ENCODE measurements at regions of chr6 and their contacts with region 1.

Region 1: DNA sequence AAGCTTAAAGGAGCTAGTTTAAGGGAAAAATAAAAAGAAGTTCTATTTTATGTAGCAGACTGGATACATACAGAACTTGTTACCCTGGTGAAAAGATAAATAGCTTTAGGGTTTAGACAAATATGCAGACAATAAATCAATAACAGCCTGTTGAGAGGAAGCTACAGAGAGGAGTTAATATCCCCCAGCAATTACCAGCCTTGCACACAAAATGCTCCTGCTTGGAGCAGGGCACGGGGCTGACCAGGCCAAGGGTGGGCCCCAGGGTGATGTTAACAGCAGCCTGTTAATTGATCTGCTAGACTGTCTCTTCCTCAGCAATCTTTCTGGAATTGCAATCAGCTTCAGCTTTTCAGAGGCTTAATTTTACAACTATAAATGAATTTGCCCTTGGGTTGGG is 125.1 kb upstream of the SOX4 start:
- DNase-seq: peak in 1 of 2 experiments; percentile 3
- H3K4me3 ChIP-seq: no peak overlapping the region
- H3K4me3 Mint-ChIP-seq: no peak overlapping the region
- H3K27ac Mint-ChIP-seq: no peak overlapping the region
- H3K4me1 ChIP-seq: peaks cover 11% of the 10 kb centered on the region; the same call in 1 of the 2 replicates
- H3K4me1 Mint-ChIP-seq: peaks cover 7% of the 10 kb centered on the region
- H3K27me3 ChIP-seq: no peaks in the 10 kb centered on the region
- H3K27me3 Mint-ChIP-seq: no peaks in the 10 kb centered on the region
- CTCF ChIP-seq: no peak

Region 2: GRCh38 chr6:21396313-21396712 is 72.1 kb before region 1 on chr6:
- CTCF ChIA-PET with region 1: no interaction called
- POLR2A ChIA-PET with region 1: no interaction called
- intact Hi-C with region 1: loop called (anchors 5 kb)
- DNase-seq: no peak
- H3K4me3 ChIP-seq: no peak overlapping the region
- H3K4me3 Mint-ChIP-seq: no peak overlapping the region
- H3K27ac Mint-ChIP-seq: peak overlapping the region; percentile 14
- H3K4me1 ChIP-seq: peaks cover 64% of the 10 kb centered on the region
- H3K4me1 Mint-ChIP-seq: peaks cover 34% of the 10 kb centered on the region
- H3K27me3 ChIP-seq: no peaks in the 10 kb centered on the region
- H3K27me3 Mint-ChIP-seq: no peaks in the 10 kb centered on the region
- CTCF ChIP-seq: no peak

Measured in Caco-2 (cell line).